MCF 10A (cell line): ENCODE measurements at regions of chr3 and their contacts with region 1.

Region 1: DNA sequence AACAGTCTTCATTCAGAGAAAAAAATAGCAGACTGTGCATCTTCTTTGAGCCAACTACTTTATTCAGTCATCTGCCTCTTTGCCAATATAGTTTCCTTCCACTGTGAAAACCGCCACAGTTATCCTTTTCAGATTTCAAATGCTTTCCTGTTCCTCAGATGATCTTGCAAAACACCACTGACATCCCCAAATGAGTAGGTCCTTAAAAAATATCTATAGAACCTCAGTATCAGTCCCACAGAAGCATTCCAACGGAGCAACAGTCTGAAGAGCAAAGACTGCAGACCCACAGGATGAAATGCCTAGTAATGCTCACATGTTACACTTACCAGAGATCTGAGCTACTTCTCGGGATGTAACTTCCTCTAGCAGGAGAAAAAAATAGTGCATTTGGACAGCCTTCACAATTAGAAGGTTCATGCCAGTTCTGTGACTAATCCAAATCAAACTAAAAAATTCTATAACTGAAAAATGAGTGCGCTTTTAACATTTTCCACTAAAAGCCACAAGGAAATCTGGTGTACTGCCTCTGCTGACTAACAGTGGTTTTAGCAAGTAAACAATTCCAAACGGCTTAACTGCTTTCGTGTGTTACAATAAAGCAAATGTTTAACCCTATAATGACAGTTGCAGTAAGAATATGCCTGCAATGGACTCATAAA is at the start of gene ANKRD28:
- DNase-seq: peak; percentile 81
- H3K4me3 Mint-ChIP-seq: peak within 1 kb of the TSS; percentile 89
- H3K27ac Mint-ChIP-seq: peak within 1 kb of the TSS; percentile 97
- H3K4me1 Mint-ChIP-seq: peaks cover 23% of the 10 kb centered on the region
- H3K27me3 Mint-ChIP-seq: no peaks in the 10 kb centered on the region
- CTCF ChIP-seq: peak; percentile 23
- total RNA-seq, gene ANKRD28: 71.7 and 79.0 TPM in 2 replicates

Region 2: DNA sequence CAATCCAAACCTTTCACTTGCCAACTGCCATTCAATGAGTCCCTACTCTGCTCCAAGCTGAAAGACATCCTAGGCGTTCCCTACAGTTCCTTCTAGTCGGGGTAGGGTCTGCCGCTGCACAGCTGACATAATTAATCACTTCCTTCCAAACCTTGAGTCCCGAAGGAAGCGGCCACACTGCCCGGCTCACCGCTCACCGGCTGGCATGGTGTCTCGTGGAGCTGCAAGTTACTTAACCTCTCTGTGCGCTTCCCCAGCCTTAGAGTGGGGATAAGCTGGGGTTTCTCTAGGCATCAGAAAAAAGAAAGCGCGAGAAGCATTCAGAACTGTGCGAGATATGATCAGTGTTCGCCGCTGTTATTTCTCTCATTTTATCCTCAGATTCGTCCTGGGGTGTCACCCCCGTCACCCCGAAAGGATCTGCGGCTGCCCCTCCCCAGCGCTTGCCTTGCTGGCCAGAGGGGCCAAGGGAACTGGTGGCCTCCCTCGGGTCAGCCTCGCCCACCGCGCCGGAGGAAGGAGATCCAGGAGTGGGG is 733.4 kb before region 1 on chr3:
- CTCF ChIA-PET with region 1: no interaction called
- POLR2A ChIA-PET with region 1: no interaction called
- intact Hi-C with region 1: no loop called
- DNase-seq: peak; percentile 30
- H3K4me3 Mint-ChIP-seq: peak overlapping the region; percentile 80
- H3K27ac Mint-ChIP-seq: peak overlapping the region; percentile 93
- H3K4me1 Mint-ChIP-seq: peaks cover 10% of the 10 kb centered on the region
- H3K27me3 Mint-ChIP-seq: no peaks in the 10 kb centered on the region
- CTCF ChIP-seq: no peak

Region 3: GRCh38 chr3:15610082-15610759 is 187.6 kb before region 1 on chr3:
- CTCF ChIA-PET with region 1: no interaction called
- POLR2A ChIA-PET with region 1: interaction called, 9 read pairs
- intact Hi-C with region 1: loop called (anchors 5 kb)
- DNase-seq: peak; percentile 100
- H3K4me3 Mint-ChIP-seq: peak overlapping the region; percentile 12
- H3K27ac Mint-ChIP-seq: peak overlapping the region; percentile 63
- H3K4me1 Mint-ChIP-seq: peaks cover 13% of the 10 kb centered on the region
- H3K27me3 Mint-ChIP-seq: no peaks in the 10 kb centered on the region
- CTCF ChIP-seq: no peak

Region 4: GRCh38 chr3:15647611-15648167 is 150.1 kb before region 1 on chr3:
- CTCF ChIA-PET with region 1: no interaction called
- POLR2A ChIA-PET with region 1: interaction called, 10 read pairs
- intact Hi-C with region 1: loop called (anchors 1 kb)
- DNase-seq: peak; percentile 81
- H3K4me3 Mint-ChIP-seq: peak overlapping the region; percentile 64
- H3K27ac Mint-ChIP-seq: peak overlapping the region; percentile 93
- H3K4me1 Mint-ChIP-seq: peaks cover 37% of the 10 kb centered on the region
- H3K27me3 Mint-ChIP-seq: no peaks in the 10 kb centered on the region
- CTCF ChIP-seq: no peak

Region 5: DNA sequence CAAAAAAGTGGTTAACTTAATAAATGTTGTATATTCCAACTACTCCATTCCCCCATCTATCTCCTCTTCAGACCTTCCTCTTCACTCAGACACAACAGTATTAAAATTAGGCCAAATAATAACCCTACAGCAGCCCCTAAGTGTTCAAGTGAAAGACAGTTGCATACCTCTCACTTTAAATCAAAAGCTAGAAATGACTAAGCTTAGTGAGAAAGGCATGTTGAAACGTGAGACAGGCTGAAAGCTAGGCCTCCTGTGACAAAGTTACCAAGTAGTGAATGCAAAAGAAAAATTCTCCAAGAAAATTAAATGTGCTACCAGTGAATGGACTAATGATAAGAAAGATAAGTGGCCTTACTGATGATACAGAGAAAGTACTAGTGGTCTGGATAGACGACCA is 71.7 kb before region 1 on chr3:
- CTCF ChIA-PET with region 1: no interaction called
- POLR2A ChIA-PET with region 1: interaction called, 4 read pairs
- intact Hi-C with region 1: loop called (anchors 5 kb)
- DNase-seq: peak; percentile 37
- H3K4me3 Mint-ChIP-seq: no peak overlapping the region
- H3K27ac Mint-ChIP-seq: peak overlapping the region; percentile 82
- H3K4me1 Mint-ChIP-seq: peaks cover 7% of the 10 kb centered on the region
- H3K27me3 Mint-ChIP-seq: no peaks in the 10 kb centered on the region
- CTCF ChIP-seq: no peak

Region 6: GRCh38 chr3:15768421-15769255 is 29.1 kb before region 1 on chr3:
- CTCF ChIA-PET with region 1: interaction called, 4 read pairs
- POLR2A ChIA-PET with region 1: interaction called, 42 read pairs
- intact Hi-C with region 1: loop called (anchors 1 kb)
- DNase-seq: peak; percentile 96
- H3K4me3 Mint-ChIP-seq: peak overlapping the region; percentile 28
- H3K27ac Mint-ChIP-seq: peak overlapping the region; percentile 81
- H3K4me1 Mint-ChIP-seq: peaks cover 24% of the 10 kb centered on the region
- H3K27me3 Mint-ChIP-seq: no peaks in the 10 kb centered on the region
- CTCF ChIP-seq: no peak

Region 7: DNA sequence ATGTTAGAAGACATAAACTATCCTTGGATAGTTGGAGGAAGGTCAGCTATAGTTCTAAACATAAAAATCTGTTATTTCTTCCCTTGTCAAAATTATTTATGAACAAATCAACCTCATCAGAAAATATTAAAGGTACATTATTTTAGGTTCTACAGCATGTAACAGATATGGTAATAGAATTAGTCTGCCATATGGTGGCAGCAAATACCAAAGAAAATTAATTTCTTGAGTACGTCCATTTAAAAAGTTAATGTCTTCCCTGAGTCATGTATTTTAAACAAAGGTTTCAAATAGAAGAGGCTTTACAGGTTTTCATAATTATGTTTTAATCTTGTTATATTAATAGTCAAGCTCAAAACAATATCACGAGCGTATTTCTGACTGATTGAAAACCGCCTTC is 17.9 kb after region 1 on chr3:
- CTCF ChIA-PET with region 1: interaction called, 22 read pairs
- POLR2A ChIA-PET with region 1: interaction called, 5 read pairs
- intact Hi-C with region 1: no loop called
- DNase-seq: peak; percentile 68
- H3K4me3 Mint-ChIP-seq: no peak overlapping the region
- H3K27ac Mint-ChIP-seq: peak overlapping the region; percentile 27
- H3K4me1 Mint-ChIP-seq: peaks cover 18% of the 10 kb centered on the region
- H3K27me3 Mint-ChIP-seq: no peaks in the 10 kb centered on the region
- CTCF ChIP-seq: peak; percentile 43

Region 8: GRCh38 chr3:15876669-15877183 is 79.0 kb after region 1 on chr3:
- CTCF ChIA-PET with region 1: no interaction called
- POLR2A ChIA-PET with region 1: no interaction called
- intact Hi-C with region 1: no loop called
- DNase-seq: no peak
- H3K4me3 Mint-ChIP-seq: no peak overlapping the region
- H3K27ac Mint-ChIP-seq: no peak overlapping the region
- H3K4me1 Mint-ChIP-seq: peaks cover 8% of the 10 kb centered on the region
- H3K27me3 Mint-ChIP-seq: no peaks in the 10 kb centered on the region
- CTCF ChIP-seq: no peak